Common myeloid progenitor, CD34-positive (primary cell): ENCODE measurements at regions of chr17 and their contacts with region 1.

Region 1: DNA sequence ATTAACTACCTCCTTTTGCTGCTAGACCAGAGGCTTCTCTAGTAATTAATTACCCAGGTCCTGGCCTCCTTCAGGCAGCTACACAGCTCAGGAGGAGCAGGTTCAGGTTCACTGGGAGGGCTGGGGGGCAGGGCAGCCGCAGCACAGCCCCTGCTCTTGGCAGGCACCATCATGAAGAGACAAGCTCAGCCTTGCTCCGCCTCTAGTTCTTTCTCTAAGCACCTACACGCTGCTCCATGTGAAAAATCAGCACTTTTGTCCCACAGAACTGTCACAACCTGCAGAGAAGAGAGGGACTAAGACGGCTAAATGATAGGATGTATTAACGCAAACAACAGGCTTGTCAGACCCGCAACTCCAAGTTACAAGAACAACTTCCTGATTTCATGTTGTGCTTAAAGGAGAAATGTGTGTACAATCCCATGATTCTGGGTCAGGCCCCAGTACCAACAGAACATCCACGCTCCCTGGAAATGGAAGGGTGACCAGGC is 53.4 kb downstream of the GRB2 start:
- DNase-seq: peak in 1 of 3 donors; percentile 47
- H3K4me3 ChIP-seq: peak overlapping the region in 1 of 7 experiments; percentile 42
- H3K27ac ChIP-seq: peak overlapping the region in 1 of 2 experiments; percentile 9
- H3K4me1 ChIP-seq: peaks cover 25 to 60% (median 46%) of the 10 kb centered on the region in 4 experiments
- H3K27me3 ChIP-seq: no peaks in the 10 kb centered on the region

Region 2: DNA sequence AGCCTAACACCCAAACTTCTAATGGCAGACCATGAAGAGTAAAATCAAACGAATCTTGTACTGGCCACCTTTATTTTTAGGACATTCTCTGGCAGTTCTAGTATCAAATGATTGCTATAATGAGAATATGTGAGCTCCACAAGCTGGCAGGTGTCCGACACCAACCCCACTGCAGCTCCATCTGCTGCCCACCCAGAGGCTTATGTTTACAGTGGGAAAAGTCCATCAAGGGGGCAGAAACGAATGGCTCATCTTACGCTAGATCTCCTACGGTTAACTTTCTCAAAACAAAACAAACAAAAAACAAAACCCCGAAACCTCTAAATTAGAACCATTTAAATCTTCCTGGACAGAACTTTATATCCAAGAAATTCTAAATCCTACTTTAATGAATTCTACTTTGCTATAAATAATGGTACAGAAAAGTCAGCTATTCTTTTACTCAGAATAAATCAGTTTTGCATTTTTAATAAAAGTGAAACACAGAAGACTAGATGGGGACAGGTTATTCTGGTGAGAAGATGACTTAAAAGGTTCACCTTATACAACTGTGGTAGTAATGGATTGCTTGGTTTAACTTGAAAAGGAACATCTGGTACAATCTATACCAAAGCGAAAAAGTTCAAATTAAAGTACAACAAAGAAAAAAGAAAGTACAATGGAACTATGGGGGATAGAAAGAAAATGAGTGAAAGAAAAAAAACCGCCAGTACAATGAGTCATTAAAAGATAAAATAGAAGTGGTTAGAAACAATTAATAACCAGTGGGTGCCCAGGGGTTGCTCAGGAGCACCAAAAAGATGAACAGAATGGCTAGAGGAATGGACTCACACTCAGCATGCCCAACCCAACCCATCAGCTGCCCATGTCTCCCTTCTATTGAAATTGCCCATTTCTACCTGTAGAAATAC is 13.1 kb after region 1 on chr17:
- CTCF ChIA-PET with region 1: interaction called, 10 read pairs
- POLR2A ChIA-PET with region 1: interaction called, 3 read pairs
- DNase-seq: peak in 1 of 3 donors; percentile 40
- H3K4me3 ChIP-seq: peak overlapping the region in 1 of 7 experiments; percentile 8
- H3K27ac ChIP-seq: peak overlapping the region in 1 of 2 experiments; percentile 3
- H3K4me1 ChIP-seq: peaks cover 19 to 58% (median 37%) of the 10 kb centered on the region in 4 experiments
- H3K27me3 ChIP-seq: no peaks in the 10 kb centered on the region